ENCODE measurements at regions of chr5 and their contacts with region 1.

Region 1: DNA sequence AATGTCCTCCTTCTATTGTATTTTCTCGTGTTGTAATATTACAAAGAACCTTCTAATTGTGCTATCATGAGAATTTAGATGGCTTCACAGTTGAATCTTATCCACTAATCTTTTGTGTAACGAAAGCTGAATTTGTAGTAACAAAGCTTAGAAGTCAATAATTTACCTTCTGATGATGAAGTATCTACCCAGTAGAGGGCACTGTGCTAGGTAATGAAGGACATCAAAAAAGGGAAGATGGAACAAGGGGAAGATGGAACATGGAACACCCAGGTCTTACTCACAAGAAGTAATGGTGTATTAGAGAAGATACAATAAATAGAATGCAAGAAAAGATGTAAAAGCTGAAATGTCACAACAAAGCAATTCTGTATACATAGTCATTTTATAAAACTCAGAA is 131.0 kb upstream of the CCNG1 start:
- DNase-seq: no peak
- H3K4me3 ChIP-seq: no peak overlapping the region
- H3K27ac ChIP-seq: no peak overlapping the region
- H3K4me1 ChIP-seq: 0 out of 7 replicates have a peak, but pooled peaks cover 0 to 1% (median 0%) of the 10 kb centered on the region in 4 experiments
- H3K27me3 ChIP-seq: no peaks in the 10 kb centered on the region
- CTCF ChIP-seq: peak in 2 of 3 experiments; percentile 23 to 57; a peak in 2 of 4 replicates
- EP300 ChIP-seq: no peak
- POLR2A ChIP-seq: no peak
- RAD21 ChIP-seq: peak; percentile 30 to 43; a peak in 3 of 4 replicates

Region 2: DNA sequence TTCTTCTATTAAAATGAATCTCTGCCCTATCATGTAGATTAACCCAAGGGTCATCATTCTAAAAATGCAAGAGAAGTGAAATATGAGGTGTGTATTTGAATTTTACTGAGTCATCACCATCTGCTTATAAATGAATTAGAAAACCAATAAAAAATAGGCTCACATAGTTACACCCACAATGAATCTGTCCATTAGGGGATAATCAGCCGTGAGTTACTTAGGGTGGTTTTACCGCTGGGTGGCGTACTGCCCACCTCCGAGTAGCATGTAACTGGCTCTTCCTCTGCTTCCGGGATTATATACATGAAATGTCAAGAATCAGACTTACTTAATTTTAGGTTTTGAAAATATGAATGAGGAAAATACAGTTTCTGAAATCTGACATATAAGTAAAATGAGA is 202.0 kb before region 1 on chr5:
- CTCF ChIA-PET with region 1: interaction called, 11 read pairs
- POLR2A ChIA-PET with region 1: no interaction called
- DNase-seq: peak; percentile 10 to 67
- H3K4me3 ChIP-seq: no peak overlapping the region
- H3K27ac ChIP-seq: no peak overlapping the region
- H3K4me1 ChIP-seq: no peaks in the 10 kb centered on the region; a peak in 1 of 7 replicates
- H3K27me3 ChIP-seq: no peaks in the 10 kb centered on the region
- CTCF ChIP-seq: peak; percentile 76 to 83 (median 81)
- EP300 ChIP-seq: no peak
- POLR2A ChIP-seq: no peak
- RAD21 ChIP-seq: peak; percentile 67 to 74

Region 3: GRCh38 chr5:163124207-163124606 is 182.2 kb before region 1 on chr5:
- CTCF ChIA-PET with region 1: no interaction called
- POLR2A ChIA-PET with region 1: no interaction called
- DNase-seq: no peak
- H3K4me3 ChIP-seq: no peak overlapping the region
- H3K27ac ChIP-seq: no peak overlapping the region
- H3K4me1 ChIP-seq: no peaks in the 10 kb centered on the region
- H3K27me3 ChIP-seq: no peaks in the 10 kb centered on the region
- CTCF ChIP-seq: no peak
- EP300 ChIP-seq: no peak
- POLR2A ChIP-seq: no peak
- RAD21 ChIP-seq: no peak

Region 4: GRCh38 chr5:163172540-163173338 is 133.7 kb before region 1 on chr5:
- CTCF ChIA-PET with region 1: no interaction called
- POLR2A ChIA-PET with region 1: no interaction called
- DNase-seq: no peak
- H3K4me3 ChIP-seq: no peak overlapping the region
- H3K27ac ChIP-seq: no peak overlapping the region
- H3K4me1 ChIP-seq: no peaks in the 10 kb centered on the region
- H3K27me3 ChIP-seq: no peaks in the 10 kb centered on the region
- CTCF ChIP-seq: no peak
- EP300 ChIP-seq: no peak
- POLR2A ChIP-seq: no peak
- RAD21 ChIP-seq: no peak

Region 5: GRCh38 chr5:163221581-163221980 is 84.8 kb before region 1 on chr5:
- CTCF ChIA-PET with region 1: no interaction called
- POLR2A ChIA-PET with region 1: no interaction called
- DNase-seq: no peak
- H3K4me3 ChIP-seq: no peak overlapping the region
- H3K27ac ChIP-seq: no peak overlapping the region
- H3K4me1 ChIP-seq: no peaks in the 10 kb centered on the region
- H3K27me3 ChIP-seq: no peaks in the 10 kb centered on the region
- CTCF ChIP-seq: no peak
- EP300 ChIP-seq: no peak
- POLR2A ChIP-seq: no peak
- RAD21 ChIP-seq: no peak

Region 6: DNA sequence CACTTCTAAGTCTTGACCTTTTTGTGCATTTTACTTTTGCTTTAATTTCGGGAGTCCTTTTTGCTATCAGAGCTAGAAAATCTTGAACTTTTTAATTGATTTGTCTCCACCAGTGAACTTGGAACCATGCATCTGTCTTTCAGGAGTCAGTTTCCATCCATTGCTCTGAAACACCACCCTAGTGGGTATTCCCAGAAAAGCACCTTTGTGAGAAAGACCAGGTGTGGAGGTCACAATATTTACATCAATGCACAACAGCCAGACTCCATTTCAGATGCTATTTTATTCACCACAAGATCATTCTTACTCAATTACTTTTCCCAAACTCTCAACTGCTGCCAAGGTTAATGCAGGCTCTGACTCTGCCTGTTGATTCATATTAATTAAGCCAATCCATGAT is 23.1 kb before region 1 on chr5:
- CTCF ChIA-PET with region 1: interaction called, 10 read pairs
- POLR2A ChIA-PET with region 1: interaction called, 3 read pairs
- DNase-seq: no peak
- H3K4me3 ChIP-seq: no peak overlapping the region
- H3K27ac ChIP-seq: no peak overlapping the region
- H3K4me1 ChIP-seq: no peaks in the 10 kb centered on the region
- H3K27me3 ChIP-seq: no peaks in the 10 kb centered on the region
- CTCF ChIP-seq: no peak
- EP300 ChIP-seq: no peak
- POLR2A ChIP-seq: no peak
- RAD21 ChIP-seq: no peak

Region 7: GRCh38 chr5:163293836-163294235 is 12.6 kb before region 1 on chr5:
- CTCF ChIA-PET with region 1: interaction called, 16 read pairs
- POLR2A ChIA-PET with region 1: interaction called, 3 read pairs
- DNase-seq: no peak
- H3K4me3 ChIP-seq: no peak overlapping the region
- H3K27ac ChIP-seq: no peak overlapping the region
- H3K4me1 ChIP-seq: no peaks in the 10 kb centered on the region
- H3K27me3 ChIP-seq: no peaks in the 10 kb centered on the region
- CTCF ChIP-seq: no peak
- EP300 ChIP-seq: no peak
- POLR2A ChIP-seq: no peak
- RAD21 ChIP-seq: no peak

Region 8: GRCh38 chr5:163330723-163331668 is 24.6 kb after region 1 on chr5:
- CTCF ChIA-PET with region 1: interaction called, 21 read pairs
- POLR2A ChIA-PET with region 1: interaction called, 3 read pairs
- DNase-seq: peak; percentile 57 to 71
- H3K4me3 ChIP-seq: peak overlapping the region in 2 of 4 experiments; percentile 11 to 39; a peak in 4 of 8 replicates
- H3K27ac ChIP-seq: peak overlapping the region; percentile 77
- H3K4me1 ChIP-seq: peaks cover 5 to 19% (median 13%) of the 10 kb centered on the region in 4 experiments; a peak in 6 of 7 replicates
- H3K27me3 ChIP-seq: no peaks in the 10 kb centered on the region
- CTCF ChIP-seq: no peak
- EP300 ChIP-seq: peak in 1 of 2 experiments; percentile 16; a peak in 1 of 3 replicates
- POLR2A ChIP-seq: no peak
- RAD21 ChIP-seq: no peak

Region 9: DNA sequence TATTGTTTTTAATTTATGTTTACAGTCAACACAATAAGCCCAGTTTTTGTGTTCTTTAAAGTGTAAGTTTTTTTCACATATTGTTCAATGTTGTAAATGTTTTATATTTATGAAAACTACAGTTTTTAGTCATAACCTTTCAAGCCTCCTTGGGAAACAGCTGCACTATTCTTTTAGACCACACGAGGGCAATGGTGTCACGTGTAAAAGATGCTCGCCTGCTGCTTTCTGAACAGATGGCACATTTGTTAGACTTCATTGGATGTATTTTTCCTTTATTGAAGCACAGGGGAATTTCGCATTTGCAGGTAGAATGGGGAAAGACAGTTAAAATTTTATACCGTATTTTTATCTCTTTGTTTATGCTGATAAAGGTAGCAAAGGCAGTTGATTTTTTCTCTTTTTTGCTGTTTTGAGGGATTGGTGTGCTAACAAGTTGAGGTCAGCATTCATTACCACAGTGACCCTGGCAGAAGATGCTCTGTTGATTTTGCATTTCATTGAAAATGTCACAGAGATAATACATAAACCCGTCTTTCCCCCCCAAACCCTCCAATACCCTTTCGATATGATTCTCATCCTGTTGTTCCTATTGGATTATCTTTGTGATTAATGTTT is 258.0 kb after region 1 on chr5:
- CTCF ChIA-PET with region 1: no interaction called
- POLR2A ChIA-PET with region 1: no interaction called
- DNase-seq: peak in 1 of 2 experiments; percentile 83
- H3K4me3 ChIP-seq: peak overlapping the region in 1 of 4 experiments; percentile 36; a peak in 1 of 8 replicates
- H3K27ac ChIP-seq: no peak overlapping the region
- H3K4me1 ChIP-seq: peaks cover 8 to 25% (median 18%) of the 10 kb centered on the region in 4 experiments; a peak in 6 of 7 replicates
- H3K27me3 ChIP-seq: peaks cover 0 to 20% (median 14%) of the 10 kb centered on the region in 4 experiments; a peak in 4 of 7 replicates
- CTCF ChIP-seq: peak; percentile 10 to 83 (median 62)
- EP300 ChIP-seq: no peak
- POLR2A ChIP-seq: no peak
- RAD21 ChIP-seq: peak; percentile 91